IMR-90 (cell line): ENCODE measurements at regions of chr6 and their contacts with region 1.

Region 1: GRCh38 chr6:32153564-32154513 is at the start of gene PPT2:
- DNase-seq: peak; percentile 91
- ATAC-seq: peak; percentile 80
- H3K4me3 ChIP-seq: peak within 1 kb of the TSS; percentile 67
- H3K27ac ChIP-seq: peak within 1 kb of the TSS; percentile 84
- H3K4me1 ChIP-seq: peaks cover 23% of the 10 kb centered on the region
- H3K27me3 ChIP-seq: no peaks in the 10 kb centered on the region; the same call in 1 of the 2 replicates
- CTCF ChIP-seq: 0 out of 2 replicates have a peak, but pooled peaks have one; percentile 26
- POLR2A ChIP-seq: 0 out of 2 replicates have a peak, but pooled peaks have one; percentile 13
- RAD21 ChIP-seq: no peak
- total RNA-seq, gene PPT2: 2.2 and 3.2 TPM in 2 replicates

Region 2: GRCh38 chr6:31958741-31959739 is 194.8 kb before region 1 on chr6 and contains the starts of genes NELFE and SKIC2:
- CTCF ChIA-PET with region 1: no interaction called
- POLR2A ChIA-PET with region 1: no interaction called
- dilution Hi-C with region 1: no loop called
- in situ Hi-C with region 1: no loop called
- intact Hi-C with region 1: loop called (anchors 1 kb)
- DNase-seq: peak; percentile 98
- ATAC-seq: peak; percentile 99
- H3K4me3 ChIP-seq: peak within 1 kb of the TSS; percentile 75
- H3K27ac ChIP-seq: peak within 1 kb of the TSS; percentile 74
- H3K4me1 ChIP-seq: peaks cover 7% of the 10 kb centered on the region; the same call in 1 of the 2 replicates
- H3K27me3 ChIP-seq: no peaks in the 10 kb centered on the region
- CTCF ChIP-seq: no peak
- POLR2A ChIP-seq: peak; percentile 64
- RAD21 ChIP-seq: peak; percentile 9; the same call in 1 of the 2 replicates
- total RNA-seq, gene NELFE: 76.0 and 90.8 TPM in 2 replicates
- total RNA-seq, gene SKIC2: 30.6 and 34.7 TPM in 2 replicates

Region 3: DNA sequence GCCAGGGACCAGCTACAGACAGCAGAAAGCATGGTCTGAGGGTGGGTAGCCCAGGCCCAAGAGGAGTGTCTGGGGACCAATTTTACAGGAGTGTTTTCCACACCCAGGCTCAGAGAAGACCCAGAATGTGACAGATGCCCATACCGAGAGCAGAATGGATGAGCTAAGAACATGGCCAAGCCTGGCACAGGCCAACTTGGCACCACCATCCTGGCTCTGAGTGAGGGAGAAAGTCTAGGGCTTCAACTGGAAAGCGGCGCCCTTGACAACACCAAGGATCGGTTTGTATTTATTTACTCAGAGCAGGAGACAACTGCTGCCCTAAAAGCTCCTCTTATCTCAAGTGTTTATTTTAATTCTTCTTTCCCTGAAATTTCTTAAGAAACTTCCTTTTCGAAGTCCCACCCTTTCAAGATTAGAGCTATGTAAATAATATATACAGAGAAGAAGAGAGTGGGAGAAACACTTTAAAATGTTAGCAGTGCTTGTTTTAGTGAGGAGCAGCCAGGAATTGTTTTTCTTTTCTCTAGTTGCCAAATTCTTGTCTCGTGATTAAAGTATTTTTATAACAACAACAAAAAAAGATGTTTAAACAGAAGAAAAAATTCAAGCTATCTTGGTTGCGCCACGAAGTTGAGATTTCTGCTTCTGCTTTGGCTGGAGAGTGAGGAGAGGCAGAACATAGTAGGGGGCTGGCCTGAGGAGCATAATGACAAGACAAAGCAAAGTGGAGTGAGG is 60.9 kb before region 1 on chr6:
- CTCF ChIA-PET with region 1: no interaction called
- POLR2A ChIA-PET with region 1: no interaction called
- dilution Hi-C with region 1: no loop called
- in situ Hi-C with region 1: no loop called
- intact Hi-C with region 1: loop called (anchors 2 kb)
- DNase-seq: peak; percentile 84
- ATAC-seq: peak; percentile 87
- H3K4me3 ChIP-seq: no peak overlapping the region
- H3K27ac ChIP-seq: peak overlapping the region; percentile 92
- H3K4me1 ChIP-seq: peaks cover 24% of the 10 kb centered on the region
- H3K27me3 ChIP-seq: peaks cover 62% of the 10 kb centered on the region
- CTCF ChIP-seq: no peak
- POLR2A ChIP-seq: no peak
- RAD21 ChIP-seq: no peak

Region 4: GRCh38 chr6:32177788-32178546 is 24.1 kb after region 1 on chr6 and contains the start of gene RNF5:
- CTCF ChIA-PET with region 1: no interaction called
- POLR2A ChIA-PET with region 1: no interaction called
- dilution Hi-C with region 1: no loop called
- in situ Hi-C with region 1: no loop called
- intact Hi-C with region 1: loop called (anchors 2 kb)
- DNase-seq: peak; percentile 100
- ATAC-seq: peak; percentile 78
- H3K4me3 ChIP-seq: peak within 1 kb of the TSS; percentile 65
- H3K27ac ChIP-seq: peak within 1 kb of the TSS; percentile 74
- H3K4me1 ChIP-seq: peaks cover 5% of the 10 kb centered on the region
- H3K27me3 ChIP-seq: no peaks in the 10 kb centered on the region
- CTCF ChIP-seq: no peak
- POLR2A ChIP-seq: peak; percentile 23; the same call in 1 of the 2 replicates
- RAD21 ChIP-seq: no peak
- total RNA-seq, gene RNF5: 18.8 and 28.1 TPM in 2 replicates